Panc1 (cell line): ENCODE measurements at regions of chr3 and their contacts with region 1.

Region 1: GRCh38 chr3:159260049-159260662 is 458.3 kb downstream of the MFSD1 start:
- DNase-seq: no peak
- ATAC-seq: peak; percentile 74; the same call in 1 of the 2 replicates
- H3K4me3 ChIP-seq: no peak overlapping the region
- H3K27ac ChIP-seq: no peak overlapping the region
- H3K4me1 ChIP-seq: peaks cover 2% of the 10 kb centered on the region; the same call in 1 of the 2 replicates
- H3K27me3 ChIP-seq: 0 out of 2 replicates have a peak, but pooled peaks cover 2% of the 10 kb centered on the region
- CTCF ChIP-seq: peak; percentile 75

Region 2: DNA sequence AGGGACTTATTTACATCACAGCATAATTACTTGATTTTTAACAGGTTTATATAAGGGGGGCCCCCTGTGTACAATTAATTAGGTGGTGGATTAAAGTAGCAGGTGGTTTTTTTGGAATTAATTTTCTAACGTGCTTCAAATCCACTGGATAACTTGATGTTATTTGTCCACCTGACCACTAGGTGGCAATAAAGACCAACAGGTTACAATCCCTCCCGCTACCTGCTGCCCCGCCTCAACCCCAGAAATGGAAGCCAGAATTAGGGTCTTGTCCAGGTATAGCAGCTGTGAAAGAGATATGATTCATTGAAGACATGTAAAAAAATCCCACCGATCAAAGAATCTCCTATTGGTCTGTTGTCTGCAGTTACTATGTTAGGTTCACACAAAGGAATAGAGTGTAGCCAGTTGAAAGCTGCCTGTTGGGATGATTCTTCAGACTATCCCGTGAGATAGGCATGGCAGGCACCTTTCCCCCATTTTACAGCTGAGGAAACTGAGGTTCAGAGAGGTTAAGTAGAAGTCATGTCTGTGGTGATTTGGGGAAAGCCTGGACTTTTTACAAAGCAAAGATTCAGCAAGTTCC is 414.3 kb before region 1 on chr3:
- CTCF ChIA-PET with region 1: interaction called, 13 read pairs
- POLR2A ChIA-PET with region 1: no interaction called
- in situ Hi-C with region 1: no loop called
- intact Hi-C with region 1: loop called (anchors 1 kb)
- DNase-seq: no peak
- ATAC-seq: peak; percentile 65
- H3K4me3 ChIP-seq: no peak overlapping the region
- H3K27ac ChIP-seq: no peak overlapping the region
- H3K4me1 ChIP-seq: no peaks in the 10 kb centered on the region
- H3K27me3 ChIP-seq: peaks cover 2% of the 10 kb centered on the region; the same call in 1 of the 2 replicates
- CTCF ChIP-seq: peak; percentile 90

Region 3: DNA sequence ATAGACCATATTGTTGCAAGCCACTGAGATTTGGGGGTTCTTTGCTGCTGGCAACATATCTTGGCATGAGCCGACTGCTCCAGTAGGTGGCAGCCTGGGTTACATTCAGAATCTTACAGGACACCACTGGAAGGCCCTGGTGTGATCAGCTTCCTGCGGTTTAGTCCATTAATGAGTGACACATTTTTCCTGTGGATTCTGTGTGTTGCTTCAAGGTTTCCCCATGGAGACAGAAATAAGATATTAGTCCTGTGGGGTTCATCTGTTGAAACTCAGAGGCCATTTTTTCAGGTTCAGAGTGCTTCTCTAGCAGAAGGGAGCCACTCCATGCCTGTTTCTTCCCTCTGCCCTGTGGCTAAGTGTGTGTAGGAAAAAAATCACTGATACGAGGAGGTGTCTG is 342.1 kb before region 1 on chr3:
- CTCF ChIA-PET with region 1: interaction called, 3 read pairs
- POLR2A ChIA-PET with region 1: no interaction called
- in situ Hi-C with region 1: no loop called
- intact Hi-C with region 1: loop called (anchors 2 kb)
- DNase-seq: peak; percentile 30
- ATAC-seq: peak; percentile 90
- H3K4me3 ChIP-seq: no peak overlapping the region
- H3K27ac ChIP-seq: no peak overlapping the region
- H3K4me1 ChIP-seq: no peaks in the 10 kb centered on the region
- H3K27me3 ChIP-seq: no peaks in the 10 kb centered on the region
- CTCF ChIP-seq: peak; percentile 89

Region 4: DNA sequence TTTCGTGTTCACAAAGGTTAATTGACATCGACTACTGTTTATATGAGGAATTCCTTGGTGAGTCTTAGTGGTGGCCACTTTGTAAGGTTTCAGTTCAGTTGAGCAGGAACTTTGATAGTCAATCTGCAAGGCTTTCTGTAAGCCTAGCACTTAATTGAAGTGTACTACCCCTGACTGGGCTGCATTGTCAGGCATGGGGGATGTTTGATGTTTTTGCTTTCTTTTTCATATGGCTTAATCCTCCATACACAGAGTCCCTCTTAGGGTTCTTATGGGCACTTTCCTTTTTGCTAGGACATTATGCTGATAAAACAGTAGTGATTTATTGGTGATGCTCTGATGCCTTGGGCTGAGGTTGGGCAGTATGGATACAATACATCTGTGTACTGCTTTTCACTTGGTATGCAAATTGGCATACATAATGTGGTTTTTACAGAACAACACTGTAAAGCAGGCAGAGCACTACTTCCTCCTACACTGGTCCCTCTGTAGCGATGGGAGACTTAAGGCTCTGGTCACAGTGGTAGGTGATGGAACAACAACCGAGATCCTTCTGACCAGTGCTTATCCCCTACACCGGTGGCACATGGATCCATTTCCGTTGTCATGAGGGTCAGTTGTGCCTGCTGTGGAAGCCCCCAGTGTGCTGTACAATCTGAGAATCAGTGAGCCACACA is 197.3 kb before region 1 on chr3:
- CTCF ChIA-PET with region 1: no interaction called
- POLR2A ChIA-PET with region 1: no interaction called
- in situ Hi-C with region 1: no loop called
- intact Hi-C with region 1: no loop called
- DNase-seq: no peak
- ATAC-seq: no peak
- H3K4me3 ChIP-seq: no peak overlapping the region
- H3K27ac ChIP-seq: no peak overlapping the region
- H3K4me1 ChIP-seq: no peaks in the 10 kb centered on the region
- H3K27me3 ChIP-seq: no peaks in the 10 kb centered on the region
- CTCF ChIP-seq: no peak

Region 5: DNA sequence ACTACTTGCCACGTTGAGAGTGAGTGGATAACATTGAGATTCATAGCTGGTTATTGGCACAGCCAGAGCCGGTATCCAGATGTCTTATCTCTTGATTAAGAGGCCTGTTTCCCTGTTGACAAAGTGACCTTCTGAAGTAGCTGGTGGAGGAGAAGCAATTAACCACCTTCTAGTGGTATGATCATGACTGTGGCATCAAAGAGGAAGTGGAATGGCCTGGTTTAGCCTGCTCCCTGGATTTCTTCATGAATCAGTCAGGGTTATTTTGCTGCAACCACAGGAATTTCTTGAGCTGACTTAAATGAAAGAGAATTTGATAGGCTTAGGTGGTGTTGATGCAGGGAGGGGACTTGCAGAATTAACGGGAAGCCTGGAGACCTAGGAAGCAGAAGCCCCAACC is 60.0 kb before region 1 on chr3:
- CTCF ChIA-PET with region 1: no interaction called
- POLR2A ChIA-PET with region 1: no interaction called
- in situ Hi-C with region 1: no loop called
- intact Hi-C with region 1: no loop called
- DNase-seq: no peak
- ATAC-seq: no peak
- H3K4me3 ChIP-seq: no peak overlapping the region
- H3K27ac ChIP-seq: no peak overlapping the region
- H3K4me1 ChIP-seq: no peaks in the 10 kb centered on the region
- H3K27me3 ChIP-seq: no peaks in the 10 kb centered on the region
- CTCF ChIP-seq: no peak

Region 6: GRCh38 chr3:159378396-159379194 is 118.4 kb after region 1 on chr3:
- CTCF ChIA-PET with region 1: no interaction called
- POLR2A ChIA-PET with region 1: no interaction called
- in situ Hi-C with region 1: no loop called
- intact Hi-C with region 1: no loop called
- DNase-seq: no peak
- ATAC-seq: no peak
- H3K4me3 ChIP-seq: no peak overlapping the region
- H3K27ac ChIP-seq: no peak overlapping the region
- H3K4me1 ChIP-seq: no peaks in the 10 kb centered on the region
- H3K27me3 ChIP-seq: no peaks in the 10 kb centered on the region
- CTCF ChIP-seq: no peak

Region 7: GRCh38 chr3:159586571-159587202 is 326.5 kb after region 1 on chr3:
- CTCF ChIA-PET with region 1: no interaction called
- POLR2A ChIA-PET with region 1: no interaction called
- in situ Hi-C with region 1: no loop called
- intact Hi-C with region 1: loop called (anchors 1 kb)
- DNase-seq: no peak
- ATAC-seq: peak; percentile 86
- H3K4me3 ChIP-seq: no peak overlapping the region
- H3K27ac ChIP-seq: no peak overlapping the region
- H3K4me1 ChIP-seq: no peaks in the 10 kb centered on the region
- H3K27me3 ChIP-seq: peaks cover 2% of the 10 kb centered on the region
- CTCF ChIP-seq: peak; percentile 79